CD8-positive, alpha-beta T cell (primary cell): ENCODE measurements at regions of chr2 and their contacts with region 1.

Region 1: GRCh38 chr2:20097879-20098714 is 46.7 kb upstream of the LAPTM4A start:
- DNase-seq: peak; percentile 60 to 81 (median 73)
- ATAC-seq: peak; percentile 98
- H3K4me3 ChIP-seq: no peak overlapping the region
- H3K4me3 Mint-ChIP-seq: no peak overlapping the region
- H3K27ac ChIP-seq: no peak overlapping the region
- H3K27ac Mint-ChIP-seq: no peak overlapping the region
- H3K4me1 ChIP-seq: no peaks in the 10 kb centered on the region
- H3K4me1 Mint-ChIP-seq: no peaks in the 10 kb centered on the region
- H3K27me3 ChIP-seq: no peaks in the 10 kb centered on the region
- H3K27me3 Mint-ChIP-seq: peaks cover 13% of the 10 kb centered on the region
- CTCF ChIP-seq: peak; percentile 88

Region 2: DNA sequence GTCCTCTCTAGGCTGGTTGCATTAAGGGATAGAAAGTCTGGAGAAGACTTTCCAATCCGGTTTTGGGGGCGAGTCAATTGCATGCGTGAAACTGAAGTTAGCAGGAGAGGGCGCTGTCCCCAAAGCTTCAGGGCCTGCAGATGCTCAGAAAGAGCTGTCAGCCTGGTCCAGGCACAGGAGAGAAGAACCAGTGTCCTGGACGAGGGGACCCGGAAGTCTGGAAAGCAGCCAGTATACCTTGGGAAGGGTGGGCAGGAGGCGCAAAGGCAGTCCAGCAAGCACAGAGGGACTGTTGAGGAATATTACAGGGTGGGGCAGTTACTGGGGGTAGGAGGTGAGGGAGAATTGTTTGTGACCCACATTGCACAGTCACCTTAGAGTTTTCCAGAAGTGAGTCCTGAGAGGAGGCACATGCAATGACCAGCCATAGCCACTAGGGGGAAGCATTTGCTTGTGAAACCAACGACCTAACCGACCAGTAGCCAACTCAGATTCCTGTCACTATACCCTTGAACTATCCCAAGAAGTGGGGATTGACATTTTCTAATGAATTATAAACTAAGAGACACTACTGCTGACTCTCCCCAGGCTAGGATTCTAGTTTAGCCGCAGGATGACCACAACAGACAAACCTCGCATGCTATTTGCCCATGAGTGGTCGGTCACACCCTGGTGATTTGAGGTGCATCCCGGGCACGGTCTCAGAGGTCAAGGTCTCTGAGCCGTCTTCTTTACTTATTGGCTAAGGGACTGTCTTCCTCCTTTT is 1710.5 kb before region 1 on chr2:
- CTCF ChIA-PET with region 1: no interaction called
- POLR2A ChIA-PET with region 1: no interaction called
- intact Hi-C with region 1: loop called in 1 of 2 experiments (anchors 2 kb)
- DNase-seq: peak; percentile 19 to 70 (median 55)
- ATAC-seq: peak; percentile 38
- H3K4me3 ChIP-seq: no peak overlapping the region
- H3K4me3 Mint-ChIP-seq: no peak overlapping the region
- H3K27ac ChIP-seq: no peak overlapping the region
- H3K27ac Mint-ChIP-seq: no peak overlapping the region
- H3K4me1 ChIP-seq: no peaks in the 10 kb centered on the region
- H3K4me1 Mint-ChIP-seq: no peaks in the 10 kb centered on the region
- H3K27me3 ChIP-seq: no peaks in the 10 kb centered on the region
- H3K27me3 Mint-ChIP-seq: peaks cover 2% of the 10 kb centered on the region
- CTCF ChIP-seq: peak; percentile 81

Region 3: DNA sequence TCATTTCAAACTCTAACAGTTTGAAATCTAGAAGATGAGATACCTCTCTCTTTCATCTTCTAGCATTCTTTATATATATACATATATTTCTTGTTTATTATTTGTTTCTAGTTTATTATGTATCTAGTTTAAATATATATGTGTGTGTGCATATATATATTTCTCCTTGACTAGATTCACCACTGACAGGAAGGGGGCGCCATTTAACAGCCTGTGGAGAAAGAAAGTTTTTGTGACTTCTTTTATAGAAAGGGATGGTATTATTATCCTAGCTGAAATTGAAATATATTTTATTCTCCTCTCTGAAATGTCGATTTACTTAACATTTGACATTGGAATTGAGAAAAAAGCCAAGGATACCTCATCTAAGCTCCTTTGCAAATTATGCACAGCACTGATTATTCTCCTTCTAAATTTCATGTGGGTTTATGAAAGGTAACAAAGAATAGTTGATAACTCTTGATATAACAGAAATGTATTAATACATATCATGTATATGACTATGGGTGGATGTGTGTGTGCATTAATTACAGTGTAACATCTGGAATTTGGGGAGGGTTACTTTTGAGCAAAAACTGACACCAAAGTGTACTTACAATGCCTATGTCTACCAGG is 1348.1 kb before region 1 on chr2:
- CTCF ChIA-PET with region 1: no interaction called
- POLR2A ChIA-PET with region 1: no interaction called
- intact Hi-C with region 1: loop called in 1 of 2 experiments (anchors 2 kb)
- DNase-seq: peak in 5 of 9 experiments; percentile 4 to 45 (median 24)
- ATAC-seq: no peak
- H3K4me3 ChIP-seq: no peak overlapping the region
- H3K4me3 Mint-ChIP-seq: no peak overlapping the region
- H3K27ac ChIP-seq: no peak overlapping the region
- H3K27ac Mint-ChIP-seq: no peak overlapping the region
- H3K4me1 ChIP-seq: no peaks in the 10 kb centered on the region
- H3K4me1 Mint-ChIP-seq: no peaks in the 10 kb centered on the region
- H3K27me3 ChIP-seq: no peaks in the 10 kb centered on the region
- H3K27me3 Mint-ChIP-seq: no peaks in the 10 kb centered on the region
- CTCF ChIP-seq: peak; percentile 37

Region 4: GRCh38 chr2:19955544-19956422 is 142.3 kb before region 1 on chr2:
- CTCF ChIA-PET with region 1: interaction called, 7 read pairs
- POLR2A ChIA-PET with region 1: no interaction called
- intact Hi-C with region 1: loop called (anchors 1 kb)
- DNase-seq: peak; percentile 1 to 72 (median 53)
- ATAC-seq: peak; percentile 73
- H3K4me3 ChIP-seq: no peak overlapping the region
- H3K4me3 Mint-ChIP-seq: no peak overlapping the region
- H3K27ac ChIP-seq: no peak overlapping the region
- H3K27ac Mint-ChIP-seq: no peak overlapping the region
- H3K4me1 ChIP-seq: no peaks in the 10 kb centered on the region
- H3K4me1 Mint-ChIP-seq: no peaks in the 10 kb centered on the region
- H3K27me3 ChIP-seq: no peaks in the 10 kb centered on the region
- H3K27me3 Mint-ChIP-seq: no peaks in the 10 kb centered on the region
- CTCF ChIP-seq: peak; percentile 81

Region 5: GRCh38 chr2:20015472-20016083 is 82.5 kb before region 1 on chr2:
- CTCF ChIA-PET with region 1: interaction called, 29 read pairs
- POLR2A ChIA-PET with region 1: no interaction called
- intact Hi-C with region 1: loop called (anchors 1 kb)
- DNase-seq: peak in 2 of 9 experiments; percentile 45 to 65
- ATAC-seq: peak; percentile 61
- H3K4me3 ChIP-seq: no peak overlapping the region
- H3K4me3 Mint-ChIP-seq: no peak overlapping the region
- H3K27ac ChIP-seq: no peak overlapping the region
- H3K27ac Mint-ChIP-seq: no peak overlapping the region
- H3K4me1 ChIP-seq: peaks cover 8% of the 10 kb centered on the region
- H3K4me1 Mint-ChIP-seq: peaks cover 12% of the 10 kb centered on the region
- H3K27me3 ChIP-seq: peaks cover 2 to 9% of the 10 kb centered on the region in 2 experiments
- H3K27me3 Mint-ChIP-seq: peaks cover 28% of the 10 kb centered on the region
- CTCF ChIP-seq: peak; percentile 58